ENCODE measurements at regions of chr1 and their contacts with region 1.

Region 1: DNA sequence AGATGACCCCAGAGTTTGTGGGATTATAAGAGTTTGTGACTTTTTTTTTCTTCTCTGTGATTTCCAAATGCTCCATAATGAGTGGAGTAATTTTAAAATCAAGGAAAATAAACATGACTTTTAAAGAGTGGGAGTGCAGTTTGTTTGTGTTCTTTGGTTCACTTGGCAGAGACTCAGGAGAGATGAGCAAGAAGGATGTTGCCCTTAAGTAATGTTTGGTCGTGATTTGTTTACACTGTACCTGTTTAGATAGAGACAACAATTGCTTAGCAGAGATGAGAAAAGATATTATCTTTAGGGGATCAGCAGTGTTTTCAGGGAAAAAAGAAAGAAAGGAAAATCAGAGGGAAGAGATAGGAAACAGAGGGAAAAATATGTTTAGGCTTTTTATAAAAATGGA is 170.8 kb downstream of the ADSS2 start:
- DNase-seq: no peak
- ATAC-seq: no peak
- H3K4me3 ChIP-seq: no peak overlapping the region
- H3K4me3 Mint-ChIP-seq: no peak overlapping the region
- H3K27ac ChIP-seq: no peak overlapping the region
- H3K27ac Mint-ChIP-seq: no peak overlapping the region
- H3K4me1 ChIP-seq: no peaks in the 10 kb centered on the region
- H3K4me1 Mint-ChIP-seq: no peaks in the 10 kb centered on the region
- H3K27me3 ChIP-seq: no peaks in the 10 kb centered on the region
- H3K27me3 Mint-ChIP-seq: no peaks in the 10 kb centered on the region
- CTCF ChIP-seq: no peak

Region 2: GRCh38 chr1:242454262-242455045 is 1826.4 kb before region 1 on chr1:
- CTCF ChIA-PET with region 1: no interaction called
- POLR2A ChIA-PET with region 1: no interaction called
- intact Hi-C with region 1: loop called in 1 of 2 experiments (anchors 10 kb)
- DNase-seq: peak in 1 of 14 experiments; percentile 6
- ATAC-seq: no peak
- H3K4me3 ChIP-seq: no peak overlapping the region
- H3K4me3 Mint-ChIP-seq: no peak overlapping the region
- H3K27ac ChIP-seq: no peak overlapping the region
- H3K27ac Mint-ChIP-seq: no peak overlapping the region
- H3K4me1 ChIP-seq: no peaks in the 10 kb centered on the region
- H3K4me1 Mint-ChIP-seq: no peaks in the 10 kb centered on the region
- H3K27me3 ChIP-seq: peaks cover 0 to 2% of the 10 kb centered on the region in 2 experiments
- H3K27me3 Mint-ChIP-seq: peaks cover 47% of the 10 kb centered on the region
- CTCF ChIP-seq: peak; percentile 40

Region 3: GRCh38 chr1:244305746-244306341 is 25.0 kb after region 1 on chr1:
- CTCF ChIA-PET with region 1: no interaction called
- POLR2A ChIA-PET with region 1: no interaction called
- intact Hi-C with region 1: no loop called
- DNase-seq: no peak
- ATAC-seq: no peak
- H3K4me3 ChIP-seq: no peak overlapping the region
- H3K4me3 Mint-ChIP-seq: no peak overlapping the region
- H3K27ac ChIP-seq: no peak overlapping the region
- H3K27ac Mint-ChIP-seq: no peak overlapping the region
- H3K4me1 ChIP-seq: no peaks in the 10 kb centered on the region
- H3K4me1 Mint-ChIP-seq: no peaks in the 10 kb centered on the region
- H3K27me3 ChIP-seq: no peaks in the 10 kb centered on the region
- H3K27me3 Mint-ChIP-seq: no peaks in the 10 kb centered on the region
- CTCF ChIP-seq: no peak

Region 4: GRCh38 chr1:244705261-244706234 is 424.7 kb after region 1 on chr1:
- CTCF ChIA-PET with region 1: no interaction called
- POLR2A ChIA-PET with region 1: no interaction called
- intact Hi-C with region 1: no loop called
- DNase-seq: no peak
- ATAC-seq: no peak
- H3K4me3 ChIP-seq: no peak overlapping the region
- H3K4me3 Mint-ChIP-seq: no peak overlapping the region
- H3K27ac ChIP-seq: no peak overlapping the region
- H3K27ac Mint-ChIP-seq: no peak overlapping the region
- H3K4me1 ChIP-seq: no peaks in the 10 kb centered on the region
- H3K4me1 Mint-ChIP-seq: no peaks in the 10 kb centered on the region
- H3K27me3 ChIP-seq: no peaks in the 10 kb centered on the region
- H3K27me3 Mint-ChIP-seq: no peaks in the 10 kb centered on the region
- CTCF ChIP-seq: no peak

Measured in CD4-positive, alpha-beta T cell (primary cell).